Right ventricle myocardium inferior (tissue), 1 donor: ENCODE measurements at regions of chr13 and their contacts with region 1.

Region 1: GRCh38 chr13:35712907-35713761 is 236.6 kb upstream of the MAB21L1 start:
- DNase-seq: no peak
- ATAC-seq: no peak

Region 2: GRCh38 chr13:35179494-35179893 is 533.6 kb before region 1 on chr13:
- intact Hi-C with region 1: loop called (anchors 10 kb)
- DNase-seq: no peak
- ATAC-seq: peak; percentile 88

Region 3: DNA sequence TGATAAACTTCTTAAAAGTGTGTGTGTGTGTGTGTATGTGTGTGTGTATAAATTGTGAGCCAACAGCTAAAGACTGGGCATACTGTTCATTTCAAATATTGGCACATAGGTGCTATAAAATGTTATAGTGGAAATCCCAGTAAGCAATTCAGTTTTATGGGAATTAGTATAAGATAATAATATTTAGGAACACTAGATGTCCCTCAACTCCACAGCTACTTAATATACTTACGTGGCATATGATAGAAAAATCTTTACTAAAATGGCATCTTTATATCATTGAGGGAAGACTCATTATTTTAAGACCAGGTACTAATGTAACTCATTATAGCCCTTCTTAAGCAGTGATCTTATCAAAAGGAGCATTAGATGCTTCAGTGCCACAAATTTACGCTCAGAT is 502.9 kb before region 1 on chr13:
- intact Hi-C with region 1: loop called (anchors 10 kb)
- DNase-seq: no peak
- ATAC-seq: no peak

Region 4: GRCh38 chr13:36297366-36298338 is 584.5 kb after region 1 on chr13 and contains the start of gene CCDC169:
- intact Hi-C with region 1: no loop called
- DNase-seq: peak; percentile 89
- ATAC-seq: peak; percentile 86
- total RNA-seq, gene CCDC169: not detected